ENCODE measurements at regions of chr4 and their contacts with region 1.

Region 1: DNA sequence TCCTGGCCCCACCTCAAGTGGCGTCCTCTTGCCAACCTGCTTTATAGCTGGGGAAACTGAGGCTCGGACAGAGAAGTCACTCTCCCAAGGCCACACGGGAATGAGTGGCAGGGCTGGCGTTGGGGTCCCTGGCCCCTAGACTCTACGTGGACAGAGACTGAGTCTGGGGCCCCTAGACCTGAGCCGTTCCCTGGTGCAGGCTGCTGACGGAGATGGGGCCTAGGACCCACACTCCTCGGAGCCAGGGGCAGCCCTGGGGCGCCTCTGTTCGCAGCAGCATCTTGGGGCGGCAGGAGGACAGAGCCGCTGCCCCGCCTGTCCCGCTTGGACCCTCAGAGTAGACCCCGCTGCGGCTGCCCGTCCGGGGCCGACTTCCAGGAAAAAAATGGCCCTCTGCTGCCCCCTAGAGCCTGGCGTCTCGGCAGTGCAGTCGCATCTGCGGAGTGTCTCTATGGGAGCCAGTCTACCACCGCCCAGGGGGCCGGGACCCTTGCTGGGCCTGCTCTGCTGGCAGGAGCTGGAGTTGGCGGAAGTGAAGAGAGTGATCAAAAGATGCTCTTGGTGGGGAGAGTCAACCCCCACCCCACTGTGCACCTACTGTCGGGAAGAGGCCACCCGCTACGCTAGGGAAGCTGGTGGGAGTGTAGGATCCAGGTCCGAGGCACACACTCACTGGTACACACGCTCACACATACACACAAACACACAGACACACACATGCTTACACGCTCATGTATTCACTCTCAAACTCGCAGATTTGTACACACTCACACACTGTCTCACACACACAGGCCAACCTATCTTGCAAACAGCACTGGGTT is 220.1 kb downstream of the AFAP1 start:
- DNase-seq: peak; percentile 87
- CTCF ChIP-seq: peak; percentile 70

Region 2: DNA sequence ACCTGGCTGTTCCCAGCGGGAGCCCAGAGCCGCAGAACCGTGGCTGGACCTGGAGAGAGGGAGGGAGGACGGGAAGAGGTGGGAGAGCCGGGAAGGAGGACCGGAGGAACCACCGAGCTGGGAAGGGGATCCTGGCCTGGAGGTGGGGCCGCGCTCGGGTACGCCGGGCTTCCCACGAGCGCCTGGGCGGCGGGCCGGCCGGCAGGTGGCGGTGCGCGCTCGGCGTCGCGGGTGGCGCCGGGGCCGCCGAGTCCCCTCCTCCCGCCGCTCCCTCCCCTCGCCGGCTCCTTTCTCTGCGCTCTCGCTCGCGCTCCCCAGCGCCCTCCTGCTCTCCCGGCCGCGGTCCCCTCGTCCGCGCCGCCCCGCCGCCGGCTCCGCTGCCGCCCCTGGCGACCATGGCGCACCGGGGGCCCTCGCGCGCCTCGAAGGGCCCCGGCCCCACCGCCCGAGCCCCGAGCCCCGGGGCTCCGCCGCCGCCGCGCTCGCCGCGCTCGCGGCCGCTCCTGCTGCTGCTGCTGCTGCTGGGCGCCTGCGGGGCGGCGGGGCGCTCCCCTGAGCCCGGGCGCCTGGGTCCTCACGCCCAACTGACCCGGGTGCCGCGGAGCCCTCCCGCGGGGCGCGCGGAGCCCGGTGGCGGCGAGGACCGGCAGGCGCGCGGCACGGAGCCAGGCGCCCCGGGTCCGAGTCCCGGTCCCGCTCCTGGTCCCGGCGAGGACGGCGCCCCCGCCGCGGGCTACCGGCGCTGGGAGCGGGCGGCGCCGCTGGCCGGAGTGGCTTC is 527.1 kb before region 1 on chr4 and contains the start of gene SORCS2:
- in situ Hi-C with region 1: loop called (anchors 25 kb)
- DNase-seq: peak; percentile 85
- CTCF ChIP-seq: peak; percentile 67

Measured in GM13976 (cell line).